Common myeloid progenitor, CD34-positive (primary cell): ENCODE measurements at regions of chr17 and their contacts with region 1.

Region 1: DNA sequence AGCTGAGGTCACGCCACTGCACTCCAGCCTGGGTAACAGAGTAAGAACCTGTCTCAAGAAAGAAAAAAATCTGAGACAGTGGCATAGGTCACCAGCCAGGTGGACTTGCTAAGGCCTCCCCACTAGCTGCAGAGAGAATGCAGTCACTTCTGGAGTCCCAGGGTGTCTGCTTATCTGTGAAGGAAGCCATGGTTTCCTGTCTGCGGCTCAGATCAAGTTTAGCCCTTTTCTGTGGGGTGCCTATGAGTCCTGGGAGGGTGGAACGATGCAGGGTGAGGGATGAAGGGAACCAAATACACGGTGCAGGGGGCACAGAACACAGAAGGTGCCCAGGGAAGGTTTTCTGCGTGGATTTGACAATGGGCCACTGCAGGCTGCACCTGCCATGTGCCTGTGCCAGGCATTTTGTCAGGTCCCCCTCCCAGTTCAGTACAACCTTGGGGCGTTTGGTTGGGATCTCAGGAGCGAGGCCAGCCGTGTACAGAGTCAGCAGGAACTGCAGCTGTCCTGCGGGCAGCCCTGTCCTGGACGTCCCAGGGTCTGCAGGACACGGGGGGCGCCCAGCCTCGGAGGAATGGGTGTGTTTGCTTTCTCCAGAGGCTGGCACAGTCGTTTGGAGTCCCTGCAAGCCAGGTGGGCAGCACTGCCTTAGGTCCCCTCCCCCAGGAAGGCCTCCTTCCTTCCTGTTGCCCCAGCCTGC is 41.8 kb downstream of the RAB11FIP4 start:
- DNase-seq: peak; percentile 93 to 99 (median 99)
- H3K4me3 ChIP-seq: peak overlapping the region in 4 of 7 experiments; percentile 31 to 63 (median 43)
- H3K27ac ChIP-seq: no peak overlapping the region
- H3K4me1 ChIP-seq: peaks cover 0 to 30% (median 24%) of the 10 kb centered on the region in 4 experiments
- H3K27me3 ChIP-seq: peaks cover 0 to 2% (median 0%) of the 10 kb centered on the region in 5 experiments

Region 2: GRCh38 chr17:31448467-31449077 is 15.3 kb after region 1 on chr17:
- CTCF ChIA-PET with region 1: interaction called, 10 read pairs
- POLR2A ChIA-PET with region 1: no interaction called
- DNase-seq: no peak
- H3K4me3 ChIP-seq: no peak overlapping the region
- H3K27ac ChIP-seq: no peak overlapping the region
- H3K4me1 ChIP-seq: no peaks in the 10 kb centered on the region
- H3K27me3 ChIP-seq: peaks cover 0 to 2% (median 0%) of the 10 kb centered on the region in 5 experiments

Region 3: GRCh38 chr17:31517524-31517923 is 84.3 kb after region 1 on chr17:
- CTCF ChIA-PET with region 1: interaction called, 167 read pairs
- POLR2A ChIA-PET with region 1: no interaction called
- DNase-seq: no peak
- H3K4me3 ChIP-seq: no peak overlapping the region
- H3K27ac ChIP-seq: no peak overlapping the region
- H3K4me1 ChIP-seq: no peaks in the 10 kb centered on the region
- H3K27me3 ChIP-seq: no peaks in the 10 kb centered on the region

Region 4: DNA sequence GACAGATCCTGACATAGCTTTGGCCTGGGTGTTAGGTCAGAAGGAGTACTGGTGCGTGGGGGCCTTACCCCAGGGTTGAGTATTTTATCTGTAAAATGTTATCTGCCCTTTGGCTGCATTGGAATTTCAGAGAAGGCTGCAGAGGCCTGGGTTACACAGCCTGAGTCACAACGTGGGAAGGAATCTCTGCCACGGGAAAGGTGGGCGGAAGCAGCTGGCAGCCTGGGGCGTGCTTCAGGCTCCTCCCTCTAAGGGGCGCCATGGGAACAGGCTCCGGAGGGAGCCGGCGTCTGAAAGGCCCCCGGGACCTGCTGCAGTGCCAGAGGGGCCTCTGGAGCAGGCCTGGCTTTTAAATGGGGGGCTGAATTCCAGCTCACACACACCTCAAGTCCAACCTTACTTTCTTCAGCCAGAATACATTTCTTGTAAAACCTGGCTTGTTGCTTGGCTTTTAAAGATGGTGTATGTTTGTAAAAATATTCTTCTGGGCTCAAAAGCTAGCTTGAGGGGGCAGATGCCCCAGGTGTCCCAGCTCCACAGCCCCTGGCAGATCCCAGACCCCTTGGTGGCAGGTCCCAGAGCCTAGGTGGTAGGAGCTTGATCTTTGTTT is 100.4 kb after region 1 on chr17:
- CTCF ChIA-PET with region 1: interaction called, 167 read pairs
- POLR2A ChIA-PET with region 1: no interaction called
- DNase-seq: peak in 2 of 3 donors; percentile 47 to 61
- H3K4me3 ChIP-seq: no peak overlapping the region
- H3K27ac ChIP-seq: no peak overlapping the region
- H3K4me1 ChIP-seq: peaks cover 9 to 49% (median 45%) of the 10 kb centered on the region in 4 experiments
- H3K27me3 ChIP-seq: no peaks in the 10 kb centered on the region